ENCODE measurements at regions of chr17 and their contacts with region 1.

Region 1: GRCh38 chr17:67125417-67125816 is 81.1 kb downstream of the CACNG1 start:
- DNase-seq: no peak
- H3K4me3 Mint-ChIP-seq: no peak overlapping the region
- H3K27ac Mint-ChIP-seq: no peak overlapping the region
- H3K4me1 Mint-ChIP-seq: peaks cover 4% of the 10 kb centered on the region
- H3K27me3 Mint-ChIP-seq: no peaks in the 10 kb centered on the region

Region 2: GRCh38 chr17:66767154-66767933 is 358.1 kb before region 1 on chr17:
- intact Hi-C with region 1: loop called (anchors 5 kb)
- DNase-seq: no peak
- H3K4me3 Mint-ChIP-seq: no peak overlapping the region
- H3K27ac Mint-ChIP-seq: peak overlapping the region; percentile 62
- H3K4me1 Mint-ChIP-seq: peaks cover 15% of the 10 kb centered on the region
- H3K27me3 Mint-ChIP-seq: no peaks in the 10 kb centered on the region

Measured in activated T-helper 2 cell treated with anti-CD3 and anti-CD28 coated beads, Interferon-gamma antibody, Interleukin-2, Interleukin-4, amounts not matched to agents 10 μg/mL and 5 μg/mL and 100 μg/mL, durations not matched to agents 14 hours and 24 hours and 36 hours (primary cell).